ENCODE measurements at regions of chr17 and their contacts with region 1.

Region 1: GRCh38 chr17:42101513-42102319 is 3.4 kb upstream of the ZNF385C start:
- DNase-seq: peak; percentile 92
- H3K4me3 ChIP-seq: no peak overlapping the region
- H3K27ac ChIP-seq: no peak overlapping the region
- H3K4me1 ChIP-seq: peaks cover 0 to 8% of the 10 kb centered on the region in 2 experiments; a peak in 1 of 4 replicates
- H3K27me3 ChIP-seq: no peaks in the 10 kb centered on the region; the same call in 1 of the 2 replicates
- CTCF ChIP-seq: peak; percentile 86
- EP300 ChIP-seq: no peak
- RAD21 ChIP-seq: peak; percentile 86

Region 2: DNA sequence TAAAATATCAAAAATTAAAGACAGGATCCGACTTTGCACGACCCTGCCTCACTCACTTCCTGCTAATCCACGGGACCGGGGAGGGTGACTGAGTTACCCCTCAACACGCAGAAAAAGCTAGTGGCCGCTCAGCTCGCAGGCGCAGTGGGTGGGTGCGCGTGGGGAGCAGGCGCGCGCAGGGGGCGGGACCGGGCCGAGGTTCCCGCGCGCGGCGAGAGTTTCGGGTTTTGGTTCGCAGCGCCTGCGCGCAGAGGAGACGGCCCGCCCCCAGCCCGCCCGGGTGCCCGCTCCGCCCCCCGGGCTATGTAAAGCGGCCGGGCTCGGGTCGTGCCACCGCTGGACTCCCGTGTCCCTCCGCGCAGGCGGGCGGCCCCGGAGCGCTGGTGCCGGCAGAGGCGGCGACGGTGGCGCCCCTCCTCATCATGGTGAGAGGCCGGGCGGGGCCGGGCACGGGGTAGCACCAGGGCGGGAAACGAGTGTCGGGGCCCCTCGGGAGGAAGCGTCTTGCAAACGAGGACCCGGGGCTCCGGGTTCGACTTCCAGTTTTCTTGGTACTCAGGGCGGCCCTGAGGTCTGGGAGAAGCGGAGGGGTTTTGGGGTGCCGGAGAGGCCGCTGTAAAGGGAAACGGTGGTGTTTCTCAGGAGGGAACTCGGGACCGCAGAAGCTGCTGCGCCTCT is 135.1 kb before region 1 on chr17 and contains the start of gene CNP:
- CTCF ChIA-PET with region 1: interaction called, 23 read pairs
- POLR2A ChIA-PET with region 1: interaction called, 3 read pairs
- DNase-seq: peak; percentile 99
- H3K4me3 ChIP-seq: peak within 1 kb of the TSS; percentile 93 to 96
- H3K27ac ChIP-seq: peak within 1 kb of the TSS; percentile 65 to 91
- H3K4me1 ChIP-seq: peaks cover 5 to 34% of the 10 kb centered on the region in 2 experiments; a peak in 2 of 4 replicates
- H3K27me3 ChIP-seq: no peaks in the 10 kb centered on the region
- CTCF ChIP-seq: no peak
- EP300 ChIP-seq: no peak
- RAD21 ChIP-seq: no peak
- polyA plus RNA-seq, gene CNP: 44.8 and 54.8 TPM in 2 replicates

Region 3: DNA sequence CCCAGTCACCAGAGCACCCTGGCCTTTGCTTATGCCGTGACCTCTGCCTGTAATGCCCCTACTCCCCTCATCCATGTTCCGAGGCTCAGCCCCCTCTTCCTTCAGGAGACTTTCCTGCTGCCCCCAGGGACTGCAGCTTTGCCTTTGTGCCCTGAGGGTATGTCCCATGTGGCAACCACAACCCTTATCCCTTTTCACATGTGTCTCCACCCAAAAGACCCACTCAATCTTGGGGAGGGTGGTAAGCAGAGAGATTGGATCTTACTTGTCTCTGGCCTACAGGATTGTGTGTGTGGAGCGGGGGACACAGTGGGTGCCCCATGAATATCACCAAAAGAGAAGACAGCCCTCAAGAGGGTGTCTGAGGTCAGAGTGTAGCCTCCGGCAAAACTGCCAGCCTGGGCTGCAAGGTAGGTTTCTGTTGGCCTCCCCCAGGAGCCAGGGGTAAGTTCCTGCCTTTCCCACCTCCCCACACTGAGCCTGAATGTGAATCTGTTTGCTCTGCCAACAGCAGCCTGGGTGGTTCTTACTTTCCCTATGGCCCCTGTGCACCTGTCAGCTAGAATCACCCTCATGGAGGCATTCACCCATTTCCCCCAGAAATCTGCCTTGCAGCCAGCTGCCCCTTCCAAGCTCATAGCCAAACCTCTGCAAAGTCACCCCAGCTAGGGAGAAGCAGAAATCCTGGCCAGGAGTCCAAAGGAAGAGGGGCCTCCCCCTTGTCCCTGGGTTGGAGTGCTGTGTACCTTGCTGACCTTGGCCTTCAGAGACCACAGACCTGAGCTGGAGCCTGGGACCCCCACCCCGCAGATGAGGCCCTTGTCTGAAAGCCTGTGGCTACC is 39.8 kb before region 1 on chr17:
- CTCF ChIA-PET with region 1: interaction called, 187 read pairs
- POLR2A ChIA-PET with region 1: no interaction called
- DNase-seq: no peak
- H3K4me3 ChIP-seq: no peak overlapping the region
- H3K27ac ChIP-seq: no peak overlapping the region
- H3K4me1 ChIP-seq: no peaks in the 10 kb centered on the region; a peak in 1 of 4 replicates
- H3K27me3 ChIP-seq: no peaks in the 10 kb centered on the region
- CTCF ChIP-seq: no peak
- EP300 ChIP-seq: no peak
- RAD21 ChIP-seq: no peak

Region 4: DNA sequence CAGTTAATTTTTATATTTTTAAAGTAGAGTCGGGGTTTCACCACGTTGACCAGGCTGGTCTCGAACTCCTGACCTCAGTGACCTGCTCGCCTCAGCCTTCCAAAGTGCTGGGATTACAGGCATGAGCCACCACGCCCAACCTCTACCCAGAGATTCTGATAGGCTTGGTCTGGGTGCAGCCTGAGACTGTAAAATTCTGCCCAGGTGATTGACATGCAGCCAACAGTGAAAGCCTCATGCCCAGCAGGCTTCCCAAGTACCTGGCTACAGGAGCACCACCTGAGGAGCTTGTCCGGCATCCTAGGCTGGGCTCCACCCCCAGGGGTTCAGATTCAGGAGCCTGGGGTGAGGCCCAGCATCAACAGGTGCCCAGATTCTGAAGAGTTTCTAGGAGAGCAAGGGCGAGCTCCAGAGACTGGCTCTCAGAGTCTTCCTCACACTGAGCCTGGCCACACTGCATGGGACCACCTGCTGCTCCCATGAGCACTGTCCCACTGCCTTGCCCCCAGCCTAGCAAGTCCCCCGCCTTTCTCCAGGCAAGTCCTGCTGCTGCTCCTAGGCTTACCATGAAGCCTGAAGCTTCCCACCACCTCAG is 20.1 kb before region 1 on chr17:
- CTCF ChIA-PET with region 1: interaction called, 11 read pairs
- POLR2A ChIA-PET with region 1: no interaction called
- DNase-seq: no peak
- H3K4me3 ChIP-seq: no peak overlapping the region
- H3K27ac ChIP-seq: no peak overlapping the region
- H3K4me1 ChIP-seq: no peaks in the 10 kb centered on the region
- H3K27me3 ChIP-seq: no peaks in the 10 kb centered on the region
- CTCF ChIP-seq: no peak
- EP300 ChIP-seq: no peak
- RAD21 ChIP-seq: no peak

Region 5: DNA sequence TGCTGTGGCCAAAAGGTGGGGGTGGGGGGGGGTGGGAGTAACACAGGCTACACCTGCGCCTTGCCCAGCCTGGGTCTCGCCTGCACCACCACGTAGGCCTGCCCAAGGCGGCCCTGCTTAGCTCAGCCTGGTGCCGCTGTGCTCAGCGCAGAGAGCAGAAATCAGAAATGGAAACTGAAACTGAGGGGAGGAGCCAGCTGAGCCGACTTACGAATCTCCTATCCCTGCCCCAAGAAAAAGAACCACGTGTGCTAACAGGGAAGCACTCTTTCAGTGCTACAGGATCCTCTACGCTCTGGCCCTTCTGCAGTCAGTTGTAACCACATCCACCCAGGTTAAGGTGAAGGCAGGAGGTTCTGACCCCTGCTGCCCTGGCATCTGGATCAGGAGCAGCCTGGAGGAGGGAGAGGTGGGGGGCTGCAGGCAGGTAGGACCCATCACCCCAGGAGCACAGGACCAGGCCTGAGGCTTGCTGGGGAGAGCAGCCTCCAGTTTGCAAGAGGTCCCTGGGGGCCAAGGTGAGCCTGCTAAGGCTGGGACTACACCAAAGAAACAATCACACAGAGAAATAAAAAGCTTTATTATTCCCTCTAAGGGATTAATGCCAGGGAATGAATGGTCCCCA is 10.9 kb after region 1 on chr17 and contains the start of gene DHX58:
- CTCF ChIA-PET with region 1: interaction called, 36 read pairs
- POLR2A ChIA-PET with region 1: no interaction called
- DNase-seq: no peak
- H3K4me3 ChIP-seq: no peak within 1 kb of the TSS
- H3K27ac ChIP-seq: no peak within 1 kb of the TSS
- H3K4me1 ChIP-seq: peaks cover 0 to 11% of the 10 kb centered on the region in 2 experiments; a peak in 1 of 4 replicates
- H3K27me3 ChIP-seq: no peaks in the 10 kb centered on the region
- CTCF ChIP-seq: no peak
- EP300 ChIP-seq: no peak
- RAD21 ChIP-seq: no peak
- polyA plus RNA-seq, gene DHX58: 1.2 and 1.6 TPM in 2 replicates

Region 6: GRCh38 chr17:43068570-43069367 is 967.1 kb after region 1 on chr17:
- CTCF ChIA-PET with region 1: no interaction called
- POLR2A ChIA-PET with region 1: no interaction called
- DNase-seq: no peak
- H3K4me3 ChIP-seq: no peak overlapping the region
- H3K27ac ChIP-seq: no peak overlapping the region
- H3K4me1 ChIP-seq: no peaks in the 10 kb centered on the region
- H3K27me3 ChIP-seq: no peaks in the 10 kb centered on the region
- CTCF ChIP-seq: no peak
- EP300 ChIP-seq: no peak
- RAD21 ChIP-seq: no peak

Measured in SK-N-SH (cell line).